Mammary epithelial cell (primary cell): ENCODE measurements at regions of chr11 and their contacts with region 1.

Region 1: DNA sequence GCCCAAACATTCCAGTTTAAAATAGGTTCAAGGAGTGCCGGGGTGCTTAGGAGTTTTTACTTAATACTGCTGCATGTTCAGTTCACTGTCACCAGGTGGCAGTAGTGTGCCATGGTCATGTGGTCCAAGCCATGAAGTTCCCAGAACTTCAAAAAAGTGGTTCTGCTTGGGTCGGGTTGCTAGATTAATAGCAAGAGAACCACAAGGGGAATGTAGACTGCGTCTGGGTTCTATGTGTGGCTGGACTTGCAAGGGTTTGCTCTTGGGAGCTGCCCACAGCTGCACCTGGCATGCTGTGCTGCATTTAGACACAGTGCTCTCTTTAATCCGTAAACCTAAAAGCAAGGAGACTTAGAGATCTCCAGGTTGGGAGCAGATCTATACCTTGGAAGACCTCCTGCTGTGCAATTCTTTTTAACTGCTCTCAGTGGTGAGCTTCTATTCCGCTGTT is 6.5 kb upstream of the SPON1 start:
- DNase-seq: no peak
- H3K4me3 ChIP-seq: no peak overlapping the region
- H3K27ac ChIP-seq: no peak overlapping the region
- H3K4me1 ChIP-seq: no peaks in the 10 kb centered on the region
- H3K27me3 ChIP-seq: peaks cover 4% of the 10 kb centered on the region
- CTCF ChIP-seq: peak; percentile 87 to 88

Region 2: GRCh38 chr11:14041040-14041439 is 85.0 kb after region 1 on chr11:
- CTCF ChIA-PET with region 1: no interaction called
- dilution Hi-C with region 1: no loop called
- in situ Hi-C with region 1: no loop called
- intact Hi-C with region 1: loop called (anchors 1 kb)
- DNase-seq: no peak
- H3K4me3 ChIP-seq: no peak overlapping the region
- H3K27ac ChIP-seq: no peak overlapping the region
- H3K4me1 ChIP-seq: peaks cover 10% of the 10 kb centered on the region
- H3K27me3 ChIP-seq: no peaks in the 10 kb centered on the region
- CTCF ChIP-seq: peak; percentile 40 to 55

Region 3: DNA sequence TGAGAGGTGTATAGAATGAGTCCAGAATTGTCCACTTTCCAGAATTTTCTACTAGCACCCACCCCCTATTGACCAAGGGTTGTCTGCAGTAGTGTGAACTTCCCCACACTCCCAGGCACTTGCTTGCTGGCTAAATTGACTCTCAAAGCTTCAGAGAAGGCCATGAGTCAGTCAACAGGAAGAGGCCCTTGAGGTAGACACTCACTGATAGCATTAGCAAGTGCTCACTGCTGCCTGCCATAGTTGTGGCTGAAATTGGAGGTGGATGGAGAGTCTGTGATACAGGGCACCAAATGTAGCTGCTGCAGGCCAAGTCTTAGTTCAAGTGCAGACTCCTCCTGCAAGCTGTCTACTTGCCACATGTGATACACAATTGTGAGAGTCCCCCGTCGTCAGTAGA is 163.4 kb after region 1 on chr11:
- CTCF ChIA-PET with region 1: no interaction called
- dilution Hi-C with region 1: no loop called
- in situ Hi-C with region 1: no loop called
- intact Hi-C with region 1: no loop called
- DNase-seq: peak; percentile 38
- H3K4me3 ChIP-seq: no peak overlapping the region
- H3K27ac ChIP-seq: no peak overlapping the region
- H3K4me1 ChIP-seq: peaks cover 6% of the 10 kb centered on the region
- H3K27me3 ChIP-seq: no peaks in the 10 kb centered on the region
- CTCF ChIP-seq: peak; percentile 6 to 15

Region 4: DNA sequence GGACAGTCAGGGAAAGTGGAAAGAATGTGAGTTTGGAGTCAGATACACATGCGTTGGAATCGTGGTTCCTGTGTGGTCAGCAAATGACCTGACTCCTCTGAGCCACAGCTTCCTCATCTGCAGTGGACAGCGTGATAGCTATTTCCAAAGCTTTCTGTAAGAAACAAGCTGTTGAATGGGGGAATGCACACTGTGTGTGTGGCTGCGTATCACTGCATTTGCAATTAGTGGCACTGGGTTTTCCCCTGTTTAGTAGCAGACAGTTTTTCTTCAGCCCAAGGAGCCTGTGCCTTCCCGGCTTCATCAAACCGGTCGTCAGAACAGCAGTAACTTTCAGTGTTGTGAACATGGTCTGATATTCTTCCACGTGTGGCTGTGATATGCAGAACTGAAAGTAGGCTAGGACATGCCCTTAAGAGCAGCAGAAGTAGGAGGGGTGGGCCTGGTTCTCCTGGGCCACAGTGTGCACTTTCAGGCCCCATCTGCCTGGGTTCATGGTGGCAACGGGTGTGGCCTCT is 281.5 kb after region 1 on chr11:
- CTCF ChIA-PET with region 1: no interaction called
- dilution Hi-C with region 1: loop called (anchors 25 kb)
- in situ Hi-C with region 1: loop called in 1 of 2 experiments (anchors 5 kb)
- intact Hi-C with region 1: no loop called
- DNase-seq: no peak
- H3K4me3 ChIP-seq: no peak overlapping the region
- H3K27ac ChIP-seq: no peak overlapping the region
- H3K4me1 ChIP-seq: no peaks in the 10 kb centered on the region
- H3K27me3 ChIP-seq: no peaks in the 10 kb centered on the region
- CTCF ChIP-seq: no peak

Region 5: GRCh38 chr11:14249121-14249963 is 293.3 kb after region 1 on chr11:
- CTCF ChIA-PET with region 1: no interaction called
- dilution Hi-C with region 1: loop called (anchors 25 kb)
- in situ Hi-C with region 1: loop called (anchors 5 kb)
- intact Hi-C with region 1: loop called (anchors 1 kb)
- DNase-seq: peak; percentile 36
- H3K4me3 ChIP-seq: no peak overlapping the region
- H3K27ac ChIP-seq: no peak overlapping the region
- H3K4me1 ChIP-seq: no peaks in the 10 kb centered on the region
- H3K27me3 ChIP-seq: peaks cover 3% of the 10 kb centered on the region
- CTCF ChIP-seq: peak; percentile 70 to 85

Region 6: GRCh38 chr11:14413307-14414069 is 457.5 kb after region 1 on chr11:
- CTCF ChIA-PET with region 1: no interaction called
- dilution Hi-C with region 1: no loop called
- in situ Hi-C with region 1: no loop called
- intact Hi-C with region 1: loop called (anchors 10 kb)
- DNase-seq: peak; percentile 48
- H3K4me3 ChIP-seq: no peak overlapping the region
- H3K27ac ChIP-seq: peak overlapping the region; percentile 20
- H3K4me1 ChIP-seq: peaks cover 67% of the 10 kb centered on the region
- H3K27me3 ChIP-seq: no peaks in the 10 kb centered on the region
- CTCF ChIP-seq: peak; percentile 10 to 21